B cell (primary cell): ENCODE measurements at regions of chr10 and their contacts with region 1.

Region 1: GRCh38 chr10:89301721-89302445 is at the start of gene IFIT2:
- DNase-seq: peak; percentile 87
- ATAC-seq: peak; percentile 95
- H3K4me3 ChIP-seq: peak within 1 kb of the TSS; percentile 57 to 92 (median 76)
- H3K4me3 Mint-ChIP-seq: peak within 1 kb of the TSS; percentile 94
- H3K27ac ChIP-seq: peak within 1 kb of the TSS; percentile 93 to 94
- H3K27ac Mint-ChIP-seq: peak within 1 kb of the TSS; percentile 97
- H3K4me1 ChIP-seq: peaks cover 37% of the 10 kb centered on the region in 2 donors
- H3K4me1 Mint-ChIP-seq: peaks cover 54% of the 10 kb centered on the region
- H3K27me3 ChIP-seq: no peaks in the 10 kb centered on the region
- H3K27me3 Mint-ChIP-seq: no peaks in the 10 kb centered on the region
- CTCF ChIP-seq: no peak
- total RNA-seq, gene IFIT2: 12.4 and 13.4 TPM in 2 replicates

Region 2: GRCh38 chr10:89251409-89252224 is 50.3 kb before region 1 on chr10 and contains the start of gene LIPA:
- CTCF ChIA-PET with region 1: no interaction called
- POLR2A ChIA-PET with region 1: no interaction called
- intact Hi-C with region 1: loop called (anchors 2 kb)
- DNase-seq: peak; percentile 99
- ATAC-seq: peak; percentile 95
- H3K4me3 ChIP-seq: peak within 1 kb of the TSS; percentile 65 to 92 (median 84)
- H3K4me3 Mint-ChIP-seq: peak within 1 kb of the TSS; percentile 94
- H3K27ac ChIP-seq: peak within 1 kb of the TSS; percentile 48 to 71
- H3K27ac Mint-ChIP-seq: peak within 1 kb of the TSS; percentile 85
- H3K4me1 ChIP-seq: peaks cover 18% of the 10 kb centered on the region in 2 donors
- H3K4me1 Mint-ChIP-seq: peaks cover 24% of the 10 kb centered on the region
- H3K27me3 ChIP-seq: no peaks in the 10 kb centered on the region
- H3K27me3 Mint-ChIP-seq: no peaks in the 10 kb centered on the region
- CTCF ChIP-seq: no peak
- total RNA-seq, gene LIPA: 36.5 and 38.9 TPM in 2 replicates

Region 3: GRCh38 chr10:89327784-89328441 is 26.0 kb after region 1 on chr10 and contains the start of gene IFIT3:
- CTCF ChIA-PET with region 1: interaction called, 7 read pairs
- POLR2A ChIA-PET with region 1: interaction called, 7 read pairs
- intact Hi-C with region 1: loop called (anchors 1 kb)
- DNase-seq: peak; percentile 65
- ATAC-seq: peak; percentile 31
- H3K4me3 ChIP-seq: peak within 1 kb of the TSS; percentile 40 to 83 (median 55)
- H3K4me3 Mint-ChIP-seq: peak within 1 kb of the TSS; percentile 88
- H3K27ac ChIP-seq: peak within 1 kb of the TSS; percentile 56 to 72
- H3K27ac Mint-ChIP-seq: peak within 1 kb of the TSS; percentile 87
- H3K4me1 ChIP-seq: peaks cover 33 to 51% of the 10 kb centered on the region in 2 donors
- H3K4me1 Mint-ChIP-seq: peaks cover 44% of the 10 kb centered on the region
- H3K27me3 ChIP-seq: no peaks in the 10 kb centered on the region
- H3K27me3 Mint-ChIP-seq: no peaks in the 10 kb centered on the region
- CTCF ChIP-seq: no peak
- total RNA-seq, gene IFIT3: 4.0 and 4.2 TPM in 2 replicates

Region 4: DNA sequence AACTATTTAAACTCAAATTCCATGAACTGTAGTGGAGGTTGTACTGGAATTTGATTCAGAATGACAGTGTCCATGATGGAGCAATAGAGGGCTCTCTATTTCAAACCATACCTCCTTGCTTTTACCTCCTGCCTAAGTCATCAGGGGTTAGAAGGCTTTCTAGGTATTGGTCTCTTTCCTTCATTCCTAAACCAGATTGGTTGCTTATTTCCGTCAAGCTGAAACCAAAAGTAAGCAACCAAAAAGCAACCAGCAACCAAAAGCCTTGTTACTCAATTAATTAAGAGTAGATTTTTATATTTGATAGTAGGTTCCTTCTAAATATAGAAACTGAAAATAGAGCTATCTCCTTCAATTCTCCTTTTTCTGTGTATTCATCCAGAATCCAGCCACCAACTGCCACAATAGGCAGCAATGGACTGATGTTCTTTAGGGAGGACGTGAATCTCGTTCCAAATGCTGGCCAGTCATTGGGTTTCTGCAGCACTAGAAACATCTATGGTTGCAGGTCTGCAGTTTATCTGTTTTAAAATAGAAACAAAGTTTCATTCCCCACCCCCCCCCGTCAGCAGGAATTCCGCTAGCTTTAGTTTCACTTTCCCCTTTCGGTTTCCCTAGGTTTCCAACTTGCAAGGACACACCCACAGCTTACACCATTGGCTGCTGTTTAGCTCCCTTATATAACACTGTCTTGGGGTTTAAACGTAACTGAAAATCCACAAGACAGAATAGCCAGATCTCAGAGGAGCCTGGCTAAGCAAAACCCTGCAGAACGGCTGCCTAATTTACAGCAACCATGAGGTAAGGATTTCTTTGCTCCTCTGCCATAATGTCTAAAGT is 90.3 kb after region 1 on chr10 and contains the start of gene IFIT1:
- CTCF ChIA-PET with region 1: interaction called, 8 read pairs
- POLR2A ChIA-PET with region 1: no interaction called
- intact Hi-C with region 1: loop called (anchors 2 kb)
- DNase-seq: peak; percentile 78
- ATAC-seq: peak; percentile 87
- H3K4me3 ChIP-seq: peak within 1 kb of the TSS; percentile 59 to 94 (median 64)
- H3K4me3 Mint-ChIP-seq: peak within 1 kb of the TSS; percentile 93
- H3K27ac ChIP-seq: peak within 1 kb of the TSS; percentile 59 to 71
- H3K27ac Mint-ChIP-seq: peak within 1 kb of the TSS; percentile 81
- H3K4me1 ChIP-seq: peaks cover 19 to 20% of the 10 kb centered on the region in 2 donors
- H3K4me1 Mint-ChIP-seq: peaks cover 28% of the 10 kb centered on the region
- H3K27me3 ChIP-seq: no peaks in the 10 kb centered on the region
- H3K27me3 Mint-ChIP-seq: no peaks in the 10 kb centered on the region
- CTCF ChIP-seq: no peak
- total RNA-seq, gene IFIT1: 1.2 and 1.4 TPM in 2 replicates

Region 5: GRCh38 chr10:90245623-90246022 is 943.7 kb after region 1 on chr10:
- CTCF ChIA-PET with region 1: no interaction called
- POLR2A ChIA-PET with region 1: no interaction called
- intact Hi-C with region 1: no loop called
- DNase-seq: no peak
- ATAC-seq: no peak
- H3K4me3 ChIP-seq: no peak overlapping the region
- H3K4me3 Mint-ChIP-seq: no peak overlapping the region
- H3K27ac ChIP-seq: no peak overlapping the region
- H3K27ac Mint-ChIP-seq: no peak overlapping the region
- H3K4me1 ChIP-seq: no peaks in the 10 kb centered on the region
- H3K4me1 Mint-ChIP-seq: no peaks in the 10 kb centered on the region
- H3K27me3 ChIP-seq: no peaks in the 10 kb centered on the region
- H3K27me3 Mint-ChIP-seq: peaks cover 2% of the 10 kb centered on the region
- CTCF ChIP-seq: no peak